Activated B cell treated with CpG ODN at 0.5 μM for 24 hours (primary cell): ENCODE measurements at regions of chr2 and their contacts with region 1.

Region 1: GRCh38 chr2:151771599-151772358 is 37.5 kb upstream of the NEB start:
- DNase-seq: peak; percentile 66
- ATAC-seq: peak; percentile 82
- H3K4me3 Mint-ChIP-seq: peak overlapping the region; percentile 60
- H3K27ac Mint-ChIP-seq: peak overlapping the region; percentile 98
- H3K4me1 Mint-ChIP-seq: peaks cover 94% of the 10 kb centered on the region
- H3K27me3 Mint-ChIP-seq: no peaks in the 10 kb centered on the region
- CTCF ChIP-seq: no peak

Region 2: DNA sequence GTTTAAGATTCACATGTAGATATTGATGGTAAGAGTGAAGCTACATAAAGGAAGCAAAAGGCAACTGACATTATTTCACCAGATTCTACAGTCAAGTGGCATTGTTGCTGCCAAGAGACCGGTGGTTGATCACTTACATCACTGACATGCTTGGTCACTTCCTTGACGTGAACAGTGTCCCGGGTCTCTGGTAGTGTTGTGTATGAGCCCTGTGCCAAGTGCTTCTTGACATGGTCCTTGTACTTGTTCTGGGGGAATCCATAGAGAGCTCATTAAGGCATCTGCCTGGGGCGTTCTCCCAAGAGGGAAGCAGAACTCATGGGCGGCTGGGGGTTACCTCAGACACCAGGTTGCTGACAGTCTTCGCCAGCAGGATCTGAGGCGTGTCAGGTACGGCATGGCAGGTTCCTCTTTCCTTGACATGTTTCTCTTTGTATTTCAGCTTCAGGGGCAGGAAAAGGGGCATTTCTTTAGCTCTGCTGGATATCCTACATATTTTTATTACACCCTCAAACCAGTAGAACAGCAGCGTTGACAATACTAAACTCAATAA is 245.9 kb before region 1 on chr2:
- CTCF ChIA-PET with region 1: no interaction called
- POLR2A ChIA-PET with region 1: no interaction called
- intact Hi-C with region 1: loop called (anchors 5 kb)
- DNase-seq: peak; percentile 32
- ATAC-seq: peak; percentile 92
- H3K4me3 Mint-ChIP-seq: peak overlapping the region; percentile 70
- H3K27ac Mint-ChIP-seq: peak overlapping the region; percentile 77
- H3K4me1 Mint-ChIP-seq: peaks cover 18% of the 10 kb centered on the region
- H3K27me3 Mint-ChIP-seq: no peaks in the 10 kb centered on the region
- CTCF ChIP-seq: no peak

Region 3: GRCh38 chr2:151786483-151786882 is 14.7 kb after region 1 on chr2:
- CTCF ChIA-PET with region 1: interaction called, 4 read pairs
- POLR2A ChIA-PET with region 1: interaction called, 19 read pairs
- intact Hi-C with region 1: loop called (anchors 2 kb)
- DNase-seq: no peak
- ATAC-seq: peak; percentile 25
- H3K4me3 Mint-ChIP-seq: no peak overlapping the region
- H3K27ac Mint-ChIP-seq: no peak overlapping the region
- H3K4me1 Mint-ChIP-seq: peaks cover 28% of the 10 kb centered on the region
- H3K27me3 Mint-ChIP-seq: no peaks in the 10 kb centered on the region
- CTCF ChIP-seq: no peak

Region 4: GRCh38 chr2:151808258-151809072 is 36.7 kb after region 1 on chr2:
- CTCF ChIA-PET with region 1: interaction called, 5 read pairs
- POLR2A ChIA-PET with region 1: interaction called, 7 read pairs
- intact Hi-C with region 1: loop called (anchors 1 kb)
- DNase-seq: no peak
- ATAC-seq: peak; percentile 60
- H3K4me3 Mint-ChIP-seq: no peak overlapping the region
- H3K27ac Mint-ChIP-seq: no peak overlapping the region
- H3K4me1 Mint-ChIP-seq: peaks cover 4% of the 10 kb centered on the region
- H3K27me3 Mint-ChIP-seq: no peaks in the 10 kb centered on the region
- CTCF ChIP-seq: peak; percentile 20

Region 5: GRCh38 chr2:152717228-152718075 is 945.7 kb after region 1 on chr2 and contains the start of gene PRPF40A:
- CTCF ChIA-PET with region 1: no interaction called
- POLR2A ChIA-PET with region 1: no interaction called
- intact Hi-C with region 1: loop called (anchors 1 kb)
- DNase-seq: peak; percentile 97
- ATAC-seq: peak; percentile 76
- H3K4me3 Mint-ChIP-seq: peak within 1 kb of the TSS; percentile 100
- H3K27ac Mint-ChIP-seq: peak within 1 kb of the TSS; percentile 98
- H3K4me1 Mint-ChIP-seq: peaks cover 51% of the 10 kb centered on the region
- H3K27me3 Mint-ChIP-seq: no peaks in the 10 kb centered on the region
- CTCF ChIP-seq: no peak
- total RNA-seq, gene PRPF40A: 126 and 129 TPM in 2 replicates